ENCODE measurements at regions of chr2 and their contacts with region 1.

Region 1: DNA sequence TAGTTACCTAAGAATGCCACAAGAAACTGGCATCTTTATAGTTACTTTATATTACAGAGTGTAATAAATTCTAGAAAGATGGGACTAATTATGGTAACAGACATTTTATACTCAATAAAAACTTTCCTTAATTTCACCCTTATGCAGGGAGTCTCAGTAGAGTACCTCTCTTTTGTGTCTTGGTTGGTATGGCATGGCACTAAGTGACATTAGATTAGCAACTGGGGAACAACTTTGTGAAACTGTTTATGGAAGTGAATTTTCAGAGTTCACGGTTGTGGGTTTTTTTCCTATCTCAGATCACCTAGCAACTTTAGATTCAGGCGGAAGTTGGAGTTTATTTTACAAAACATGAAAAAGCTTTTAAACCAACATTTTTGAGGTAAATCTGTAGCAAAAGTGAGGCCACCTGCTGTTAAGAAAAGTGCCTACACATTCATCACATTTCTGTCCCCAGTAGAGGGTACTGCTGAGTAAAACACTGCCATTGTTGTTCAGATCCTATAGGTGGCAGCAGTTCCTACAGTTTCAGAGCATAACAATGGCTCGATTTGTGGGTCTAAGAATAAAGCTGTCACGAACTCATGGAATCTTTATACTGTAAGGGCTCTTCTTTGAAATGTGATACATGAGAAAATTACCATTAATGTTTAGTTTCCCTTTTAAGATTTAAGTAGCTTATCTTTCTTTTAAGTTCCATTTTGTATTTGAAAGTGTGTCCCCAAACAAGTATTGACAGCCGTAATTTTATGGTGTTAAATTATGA is 117.6 kb downstream of the CAMKMT start:
- DNase-seq: peak; percentile 81
- H3K4me3 ChIP-seq: peak overlapping the region in 1 of 2 experiments; percentile 23; a peak in 1 of 4 replicates
- H3K27ac ChIP-seq: peak overlapping the region in 1 of 2 experiments; percentile 65; a peak in 2 of 4 replicates
- H3K4me1 ChIP-seq: peaks cover 0 to 12% of the 10 kb centered on the region in 2 experiments; a peak in 2 of 4 replicates
- H3K27me3 ChIP-seq: no peaks in the 10 kb centered on the region
- CTCF ChIP-seq: peak; percentile 100
- EP300 ChIP-seq: peak; percentile 15 to 49; a peak in 1 of 4 replicates
- RAD21 ChIP-seq: peak; percentile 100

Region 2: GRCh38 chr2:44038277-44038676 is 441.0 kb before region 1 on chr2:
- CTCF ChIA-PET with region 1: interaction called, 13 read pairs
- POLR2A ChIA-PET with region 1: no interaction called
- DNase-seq: no peak
- H3K4me3 ChIP-seq: no peak overlapping the region
- H3K27ac ChIP-seq: no peak overlapping the region
- H3K4me1 ChIP-seq: no peaks in the 10 kb centered on the region; a peak in 1 of 4 replicates
- H3K27me3 ChIP-seq: no peaks in the 10 kb centered on the region
- CTCF ChIP-seq: no peak
- EP300 ChIP-seq: no peak
- RAD21 ChIP-seq: no peak

Region 3: DNA sequence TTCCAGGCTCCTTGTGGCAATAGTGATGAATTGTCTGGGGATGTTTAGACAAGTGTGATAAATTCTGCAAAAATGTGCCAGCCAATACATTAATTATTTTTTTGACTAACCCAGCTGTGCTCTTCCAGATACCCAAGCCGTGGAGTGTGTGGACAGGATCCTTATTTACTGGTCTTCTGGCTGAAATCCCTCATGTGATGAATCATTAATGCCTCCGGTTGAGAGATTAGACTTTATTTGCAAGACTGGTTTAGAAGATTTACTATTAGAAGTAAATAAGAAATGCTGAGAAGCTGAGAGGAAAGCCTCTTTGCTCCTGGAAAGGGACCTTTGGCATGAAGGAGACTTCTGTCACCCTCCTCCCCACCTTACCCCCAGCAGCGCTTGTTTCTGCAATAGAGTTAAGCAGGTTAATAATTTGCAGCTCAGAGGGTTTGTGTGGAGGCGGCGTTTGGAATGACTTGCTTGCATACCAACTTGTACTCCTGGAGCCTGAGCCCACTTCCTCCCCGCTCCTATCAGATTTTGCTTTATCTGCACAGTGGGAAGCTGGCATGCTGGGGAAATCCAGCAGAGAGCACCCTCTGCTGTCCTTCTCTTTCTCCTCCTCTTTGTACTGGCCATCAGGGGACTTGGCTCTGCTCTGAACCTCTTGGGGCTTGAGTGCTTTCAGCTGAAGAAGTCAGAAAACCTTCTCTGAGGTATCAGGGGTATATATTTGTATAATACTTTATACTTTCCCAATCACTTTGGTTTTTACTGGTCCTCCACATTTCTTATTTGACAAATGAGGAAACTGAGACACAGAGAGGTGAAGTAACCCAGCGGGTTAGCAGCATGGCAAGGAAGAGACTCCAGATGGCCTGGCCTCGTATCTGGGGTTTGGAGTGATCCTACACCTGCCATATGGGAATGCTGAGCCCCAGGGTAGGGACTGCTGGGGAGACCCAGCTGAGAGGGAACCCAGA is 187.7 kb before region 1 on chr2:
- CTCF ChIA-PET with region 1: no interaction called
- POLR2A ChIA-PET with region 1: no interaction called
- DNase-seq: peak; percentile 76
- H3K4me3 ChIP-seq: peak overlapping the region; percentile 1 to 46; a peak in 2 of 4 replicates
- H3K27ac ChIP-seq: peak overlapping the region in 1 of 2 experiments; percentile 58; a peak in 2 of 4 replicates
- H3K4me1 ChIP-seq: peaks cover 6 to 15% of the 10 kb centered on the region in 2 experiments; a peak in 2 of 4 replicates
- H3K27me3 ChIP-seq: no peaks in the 10 kb centered on the region
- CTCF ChIP-seq: peak; percentile 83
- EP300 ChIP-seq: peak in 1 of 2 experiments; percentile 14; a peak in 1 of 4 replicates
- RAD21 ChIP-seq: peak; percentile 91

Region 4: DNA sequence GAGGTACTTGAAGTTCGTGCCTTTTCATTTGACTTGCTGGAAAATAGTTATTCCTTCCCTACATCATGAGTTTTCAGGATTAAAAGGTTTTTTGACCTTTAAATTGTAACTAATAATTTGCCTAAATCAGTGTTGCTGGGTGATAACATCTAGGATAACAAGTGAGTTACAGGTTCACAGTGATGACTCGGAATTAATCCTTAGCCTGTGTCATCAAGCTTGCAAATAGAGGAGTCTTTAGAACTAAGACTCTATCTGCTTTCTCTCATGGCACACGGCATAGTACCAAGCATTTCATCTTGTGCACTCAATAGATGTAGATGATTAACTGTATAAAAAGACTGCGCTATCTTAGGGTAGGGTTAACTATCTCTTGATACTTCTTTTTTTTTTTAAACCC is 38.1 kb before region 1 on chr2:
- CTCF ChIA-PET with region 1: interaction called, 25 read pairs
- POLR2A ChIA-PET with region 1: no interaction called
- DNase-seq: no peak
- H3K4me3 ChIP-seq: no peak overlapping the region
- H3K27ac ChIP-seq: no peak overlapping the region
- H3K4me1 ChIP-seq: no peaks in the 10 kb centered on the region
- H3K27me3 ChIP-seq: no peaks in the 10 kb centered on the region
- CTCF ChIP-seq: no peak
- EP300 ChIP-seq: no peak
- RAD21 ChIP-seq: no peak

Region 5: DNA sequence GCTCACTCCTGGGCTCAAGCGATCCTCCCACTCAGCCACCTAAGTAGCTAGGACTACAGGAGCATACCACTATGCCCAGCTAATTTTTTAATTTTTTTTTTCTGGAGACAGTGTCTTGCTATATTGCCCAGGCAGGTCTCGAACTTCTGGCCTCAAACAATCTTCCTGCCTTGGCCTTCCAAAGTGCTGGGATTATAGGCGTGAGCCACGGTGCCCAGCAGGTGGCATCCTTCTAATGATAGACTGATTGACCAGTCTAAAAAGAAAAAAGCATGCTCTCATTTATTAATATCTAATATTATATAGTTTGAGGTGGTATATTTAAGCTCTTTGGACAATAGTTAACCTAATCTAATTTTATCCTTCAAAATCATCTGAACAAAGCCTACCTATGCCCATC is 81.0 kb after region 1 on chr2:
- CTCF ChIA-PET with region 1: interaction called, 65 read pairs
- POLR2A ChIA-PET with region 1: no interaction called
- DNase-seq: no peak
- H3K4me3 ChIP-seq: no peak overlapping the region
- H3K27ac ChIP-seq: no peak overlapping the region
- H3K4me1 ChIP-seq: peaks cover 0 to under 1% of the 10 kb centered on the region in 2 experiments; a peak in 2 of 4 replicates
- H3K27me3 ChIP-seq: no peaks in the 10 kb centered on the region
- CTCF ChIP-seq: peak; percentile 56
- EP300 ChIP-seq: no peak
- RAD21 ChIP-seq: peak; percentile 63

Region 6: DNA sequence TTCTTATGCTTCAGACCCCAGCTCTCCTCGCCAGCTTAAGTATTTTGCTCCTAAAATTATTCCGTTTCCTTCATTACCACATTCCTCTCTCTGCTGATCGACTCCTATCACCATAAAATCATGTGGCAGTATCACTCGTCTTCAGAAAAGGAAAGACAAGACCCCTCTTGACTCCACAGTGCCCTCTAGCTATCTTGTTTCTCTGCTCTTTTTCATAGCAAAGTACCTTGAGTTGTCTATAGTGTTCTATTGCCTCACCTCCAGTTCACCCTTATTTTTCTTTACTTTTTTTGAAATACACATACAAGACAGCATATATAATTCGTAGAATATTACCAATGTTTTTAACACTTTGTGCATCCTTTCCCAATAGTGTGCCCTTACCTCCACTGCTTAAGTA is 189.0 kb after region 1 on chr2:
- CTCF ChIA-PET with region 1: interaction called, 137 read pairs
- POLR2A ChIA-PET with region 1: no interaction called
- DNase-seq: no peak
- H3K4me3 ChIP-seq: no peak overlapping the region
- H3K27ac ChIP-seq: no peak overlapping the region; a peak in 1 of 4 replicates
- H3K4me1 ChIP-seq: peaks cover 0 to 15% of the 10 kb centered on the region in 2 experiments; a peak in 2 of 4 replicates
- H3K27me3 ChIP-seq: no peaks in the 10 kb centered on the region; the same call in 1 of the 2 replicates
- CTCF ChIP-seq: peak; percentile 33
- EP300 ChIP-seq: no peak
- RAD21 ChIP-seq: peak; percentile 43

Region 7: DNA sequence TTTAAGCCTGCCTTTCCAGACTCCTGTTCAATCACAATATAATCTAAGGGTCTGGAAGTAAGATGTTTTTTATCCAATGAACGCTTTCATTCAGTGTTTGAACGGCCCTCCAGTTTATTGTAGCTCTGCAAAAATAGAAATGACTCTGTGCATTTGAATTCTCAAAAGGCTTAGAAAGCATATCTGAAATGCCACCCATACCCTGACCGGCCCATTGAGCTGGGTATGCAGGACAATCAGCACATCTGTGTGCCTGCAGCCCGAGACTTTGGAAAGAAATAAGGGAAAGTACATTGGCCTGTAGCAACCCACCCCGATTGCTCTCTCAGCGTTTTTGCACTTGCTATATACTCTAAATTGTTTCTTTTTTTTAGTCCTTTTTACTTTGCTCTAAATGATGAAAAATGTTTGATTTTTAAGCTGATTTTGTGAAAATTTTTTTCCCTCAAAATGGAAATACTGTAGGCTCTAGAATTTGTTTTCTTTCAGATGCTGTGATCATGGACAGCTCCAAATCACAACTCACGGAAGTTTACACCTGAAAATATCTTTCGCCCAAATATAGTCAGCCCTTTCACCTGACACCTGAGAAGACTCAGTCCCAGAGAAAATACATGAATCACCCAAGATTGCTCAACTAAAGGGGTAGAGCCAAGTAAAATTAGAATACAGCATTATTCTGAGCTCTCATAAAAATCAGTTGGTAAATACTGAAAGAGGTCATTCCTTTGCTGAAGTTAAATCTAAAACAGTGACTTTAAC is 267.7 kb after region 1 on chr2:
- CTCF ChIA-PET with region 1: interaction called, 20 read pairs
- POLR2A ChIA-PET with region 1: no interaction called
- DNase-seq: peak; percentile 22
- H3K4me3 ChIP-seq: no peak overlapping the region
- H3K27ac ChIP-seq: peak overlapping the region in 1 of 2 experiments; percentile 78; a peak in 2 of 4 replicates
- H3K4me1 ChIP-seq: peaks cover 0 to 41% of the 10 kb centered on the region in 2 experiments; a peak in 2 of 4 replicates
- H3K27me3 ChIP-seq: no peaks in the 10 kb centered on the region
- CTCF ChIP-seq: no peak
- EP300 ChIP-seq: no peak
- RAD21 ChIP-seq: no peak

Region 8: GRCh38 chr2:44941551-44942234 is 462.4 kb after region 1 on chr2 and contains the start of gene SIX3:
- CTCF ChIA-PET with region 1: interaction called, 581 read pairs
- POLR2A ChIA-PET with region 1: interaction called, 7 read pairs
- DNase-seq: peak; percentile 89
- H3K4me3 ChIP-seq: peak within 1 kb of the TSS; percentile 56 to 60
- H3K27ac ChIP-seq: peak within 1 kb of the TSS in 1 of 2 experiments; percentile 92; a peak in 2 of 4 replicates
- H3K4me1 ChIP-seq: peaks cover 0 to 42% of the 10 kb centered on the region in 2 experiments; a peak in 2 of 4 replicates
- H3K27me3 ChIP-seq: peaks cover 74% of the 10 kb centered on the region
- CTCF ChIP-seq: no peak
- EP300 ChIP-seq: peak in 1 of 2 experiments; percentile 21; a peak in 1 of 4 replicates
- RAD21 ChIP-seq: no peak
- polyA plus RNA-seq, gene SIX3: 0.58 and 0.67 TPM in 2 replicates